Mammary epithelial cell (primary cell): ENCODE measurements at regions of chr1 and their contacts with region 1.

Region 1: GRCh38 chr1:111755331-111756123 is at the start of gene DDX20:
- DNase-seq: peak; percentile 95
- H3K4me3 ChIP-seq: peak within 1 kb of the TSS; percentile 65 to 99 (median 71)
- H3K27ac ChIP-seq: peak within 1 kb of the TSS; percentile 81
- H3K4me1 ChIP-seq: peaks cover 18% of the 10 kb centered on the region
- H3K27me3 ChIP-seq: no peaks in the 10 kb centered on the region
- CTCF ChIP-seq: peak; percentile 66 to 81
- total RNA-seq, gene DDX20: 12.9 to 17.2 TPM

Region 2: DNA sequence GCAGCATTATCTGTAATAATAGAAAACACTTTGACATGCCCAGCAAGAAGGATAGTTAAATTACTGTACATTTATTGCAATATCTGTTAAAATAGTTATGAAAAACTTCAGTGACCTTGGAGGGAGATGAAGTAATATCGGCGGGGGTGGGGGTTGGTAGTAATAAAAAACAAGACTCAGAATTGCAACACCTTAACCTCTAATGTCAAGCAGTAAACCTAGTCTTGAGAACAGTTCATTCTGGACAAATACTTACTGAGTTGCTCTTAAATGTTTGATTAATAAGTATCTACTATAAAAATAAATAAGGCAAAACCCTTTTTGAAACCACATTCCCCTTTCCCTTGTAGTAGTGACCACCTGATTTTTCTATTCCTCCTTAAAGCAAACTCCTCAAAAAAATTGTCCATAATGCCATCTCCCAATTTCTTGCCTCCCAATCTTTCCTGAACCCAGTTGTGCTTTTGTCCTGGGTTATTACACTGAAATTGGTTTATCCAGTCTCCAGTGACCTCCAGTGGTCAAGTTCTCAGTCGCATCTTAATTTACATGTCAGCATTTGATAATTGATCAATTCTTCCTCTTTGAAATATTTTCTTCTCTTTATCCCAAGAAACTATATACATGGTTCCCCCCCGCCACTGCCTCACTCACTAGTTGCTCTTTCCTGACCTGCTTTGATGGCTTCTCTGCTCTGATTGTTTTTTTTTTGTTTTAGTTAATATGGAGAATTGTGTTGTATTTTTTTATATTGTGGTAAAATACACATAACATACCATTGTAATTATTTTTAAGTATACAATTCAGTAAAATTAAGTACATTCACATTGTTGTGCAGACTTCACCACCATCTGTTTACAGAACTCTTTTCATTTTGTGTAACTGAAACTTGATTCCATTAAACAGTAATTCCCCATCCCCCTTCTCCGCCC is 99.2 kb before region 1 on chr1:
- CTCF ChIA-PET with region 1: no interaction called
- dilution Hi-C with region 1: no loop called
- in situ Hi-C with region 1: no loop called
- intact Hi-C with region 1: loop called (anchors 1 kb)
- DNase-seq: peak; percentile 27
- H3K4me3 ChIP-seq: no peak overlapping the region
- H3K27ac ChIP-seq: no peak overlapping the region
- H3K4me1 ChIP-seq: no peaks in the 10 kb centered on the region
- H3K27me3 ChIP-seq: no peaks in the 10 kb centered on the region
- CTCF ChIP-seq: peak; percentile 52 to 65

Region 3: GRCh38 chr1:111739194-111739924 is 16.2 kb before region 1 on chr1 and contains the start of gene INKA2:
- CTCF ChIA-PET with region 1: interaction called, 4 read pairs
- dilution Hi-C with region 1: no loop called
- in situ Hi-C with region 1: no loop called
- intact Hi-C with region 1: loop called (anchors 1 kb)
- DNase-seq: peak; percentile 92
- H3K4me3 ChIP-seq: peak within 1 kb of the TSS; percentile 51 to 74 (median 68)
- H3K27ac ChIP-seq: peak within 1 kb of the TSS; percentile 71
- H3K4me1 ChIP-seq: peaks cover 23% of the 10 kb centered on the region
- H3K27me3 ChIP-seq: no peaks in the 10 kb centered on the region
- CTCF ChIP-seq: no peak
- total RNA-seq, gene INKA2: 4.2 to 8.9 TPM

Region 4: DNA sequence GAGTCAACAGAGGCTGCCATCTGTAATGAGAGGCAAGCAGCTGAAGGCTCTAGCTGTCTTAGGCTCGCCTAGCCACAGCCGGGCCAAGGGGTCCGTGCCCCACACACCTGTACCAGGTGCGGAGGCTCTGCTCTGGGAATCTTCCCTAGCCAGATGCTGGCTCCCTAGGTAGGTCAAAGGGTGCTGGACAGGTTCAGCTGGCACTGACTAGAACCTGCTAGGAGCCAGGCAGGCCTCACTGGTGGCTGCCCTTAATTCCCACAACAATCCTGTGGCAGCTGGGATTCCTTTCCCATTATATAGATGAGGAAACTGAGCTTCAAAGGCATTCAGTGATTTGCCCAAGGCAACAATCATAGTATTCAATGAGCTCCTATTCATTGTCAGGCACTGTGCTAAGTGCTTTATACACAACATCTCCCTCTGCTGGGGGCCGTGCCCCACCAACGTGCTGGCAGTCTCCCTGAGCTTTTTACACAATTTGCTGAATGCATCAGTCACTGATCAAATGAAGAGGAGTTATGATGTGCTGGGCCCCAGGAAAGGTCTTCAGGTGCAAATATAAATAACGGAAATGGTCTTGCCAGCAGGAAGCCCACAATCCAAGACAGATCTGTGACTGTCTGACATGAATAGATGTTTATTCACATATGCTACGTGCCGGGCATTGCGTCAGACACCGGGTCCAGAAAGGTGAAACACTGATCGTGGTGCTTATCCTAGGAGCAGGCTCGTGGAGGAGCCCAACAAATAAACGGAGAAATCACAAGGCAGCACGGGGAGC is 58.2 kb after region 1 on chr1:
- CTCF ChIA-PET with region 1: no interaction called
- dilution Hi-C with region 1: no loop called
- in situ Hi-C with region 1: no loop called
- intact Hi-C with region 1: no loop called
- DNase-seq: no peak
- H3K4me3 ChIP-seq: no peak overlapping the region
- H3K27ac ChIP-seq: no peak overlapping the region
- H3K4me1 ChIP-seq: no peaks in the 10 kb centered on the region
- H3K27me3 ChIP-seq: no peaks in the 10 kb centered on the region
- CTCF ChIP-seq: no peak

Region 5: GRCh38 chr1:112317140-112317539 is 561.6 kb after region 1 on chr1:
- CTCF ChIA-PET with region 1: no interaction called
- dilution Hi-C with region 1: no loop called
- in situ Hi-C with region 1: no loop called
- intact Hi-C with region 1: no loop called
- DNase-seq: no peak
- H3K4me3 ChIP-seq: no peak overlapping the region
- H3K27ac ChIP-seq: no peak overlapping the region
- H3K4me1 ChIP-seq: peaks cover 21% of the 10 kb centered on the region
- H3K27me3 ChIP-seq: no peaks in the 10 kb centered on the region
- CTCF ChIP-seq: no peak